Prostate gland (tissue), 2 donors: ENCODE measurements at regions of chr21 and their contacts with region 1.

Region 1: GRCh38 chr21:31117128-31117916 is 79.0 kb upstream of the KRTAP19-8 start:
- DNase-seq: no peak
- H3K4me3 ChIP-seq: no peak overlapping the region
- H3K27ac ChIP-seq: no peak overlapping the region
- H3K4me1 ChIP-seq: no peaks in the 10 kb centered on the region
- H3K27me3 ChIP-seq: no peaks in the 10 kb centered on the region
- CTCF ChIP-seq: no peak
- POLR2A ChIP-seq: no peak

Region 2: DNA sequence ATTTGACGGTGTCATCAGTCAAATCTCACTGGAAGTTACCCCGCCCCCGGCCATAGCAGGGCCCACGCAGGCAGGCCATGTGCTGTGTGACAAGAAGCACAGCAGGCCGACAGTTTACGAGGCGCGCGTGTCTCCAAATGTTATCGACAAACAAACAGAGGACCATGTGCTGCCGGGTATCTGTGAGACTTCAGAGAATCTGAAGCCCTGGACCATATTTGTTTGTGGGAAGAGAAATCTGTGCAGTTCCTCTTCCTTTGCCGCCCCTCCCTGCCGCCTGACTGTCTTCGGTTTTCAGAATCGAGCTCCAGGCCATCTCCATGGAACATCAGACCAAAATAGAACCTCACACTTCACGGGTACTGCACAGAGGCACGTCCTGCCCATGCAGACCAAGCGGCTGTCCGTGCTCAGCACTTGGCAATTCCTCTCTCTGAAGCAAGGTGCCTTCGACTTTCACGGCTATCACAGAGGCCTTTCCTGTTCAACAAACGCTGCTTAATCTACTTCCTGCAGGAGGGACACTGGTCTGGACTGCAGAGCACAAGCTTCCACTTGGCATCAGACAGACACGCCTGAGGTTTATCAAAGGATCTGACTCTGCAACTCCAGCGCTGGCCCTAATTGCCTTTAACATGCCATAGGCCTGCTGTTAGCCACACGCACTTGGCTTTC is 56.7 kb after region 1 on chr21:
- intact Hi-C with region 1: loop called (anchors 10 kb)
- DNase-seq: no peak
- H3K4me3 ChIP-seq: no peak overlapping the region
- H3K27ac ChIP-seq: no peak overlapping the region
- H3K4me1 ChIP-seq: no peaks in the 10 kb centered on the region
- H3K27me3 ChIP-seq: no peaks in the 10 kb centered on the region
- CTCF ChIP-seq: no peak
- POLR2A ChIP-seq: no peak